ENCODE measurements at regions of chr3 and their contacts with region 1.

Region 1: GRCh38 chr3:98602078-98602678 is 8.8 kb upstream of the CPOX start:
- DNase-seq: peak; percentile 40
- H3K4me3 Mint-ChIP-seq: no peak overlapping the region
- H3K27ac Mint-ChIP-seq: no peak overlapping the region
- H3K4me1 Mint-ChIP-seq: peaks cover 4% of the 10 kb centered on the region
- H3K27me3 Mint-ChIP-seq: peaks cover 20% of the 10 kb centered on the region

Region 2: DNA sequence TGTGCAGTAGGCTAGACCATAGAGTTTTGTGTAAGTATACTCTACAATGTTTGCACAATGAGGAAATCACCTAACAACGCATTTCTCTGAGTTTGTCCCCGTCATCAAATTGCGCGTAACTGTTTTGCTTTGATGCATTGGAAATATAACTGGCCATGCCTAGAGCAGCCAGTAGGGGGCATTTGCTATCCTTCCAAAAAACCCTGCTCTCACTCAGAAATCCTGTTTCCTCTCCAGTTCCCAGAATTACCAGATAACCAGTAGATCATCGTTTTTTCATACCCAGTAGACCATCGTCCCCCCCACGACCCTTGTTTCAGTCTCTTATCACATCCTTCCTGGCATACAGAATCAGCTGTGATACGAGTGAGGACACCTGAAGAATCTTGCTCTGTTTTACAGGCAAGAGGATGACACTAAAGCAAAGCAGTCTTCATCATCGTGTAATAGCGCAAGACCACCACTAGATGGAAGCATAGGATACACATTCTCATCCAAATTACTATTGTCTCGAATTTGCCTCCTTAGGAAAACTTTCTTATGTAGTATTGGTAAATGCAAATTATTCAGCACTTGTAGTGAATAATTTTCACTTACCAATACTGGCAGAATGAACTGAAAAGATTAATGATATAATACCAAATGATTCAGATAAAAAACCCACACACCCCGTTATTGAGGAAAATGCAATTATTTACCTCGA is 562.7 kb before region 1 on chr3:
- CTCF ChIA-PET with region 1: interaction called, 10 read pairs
- DNase-seq: peak; percentile 84
- H3K4me3 Mint-ChIP-seq: peak overlapping the region; percentile 80
- H3K27ac Mint-ChIP-seq: peak overlapping the region; percentile 90
- H3K4me1 Mint-ChIP-seq: peaks cover 22% of the 10 kb centered on the region
- H3K27me3 Mint-ChIP-seq: peaks cover 31% of the 10 kb centered on the region

Region 3: DNA sequence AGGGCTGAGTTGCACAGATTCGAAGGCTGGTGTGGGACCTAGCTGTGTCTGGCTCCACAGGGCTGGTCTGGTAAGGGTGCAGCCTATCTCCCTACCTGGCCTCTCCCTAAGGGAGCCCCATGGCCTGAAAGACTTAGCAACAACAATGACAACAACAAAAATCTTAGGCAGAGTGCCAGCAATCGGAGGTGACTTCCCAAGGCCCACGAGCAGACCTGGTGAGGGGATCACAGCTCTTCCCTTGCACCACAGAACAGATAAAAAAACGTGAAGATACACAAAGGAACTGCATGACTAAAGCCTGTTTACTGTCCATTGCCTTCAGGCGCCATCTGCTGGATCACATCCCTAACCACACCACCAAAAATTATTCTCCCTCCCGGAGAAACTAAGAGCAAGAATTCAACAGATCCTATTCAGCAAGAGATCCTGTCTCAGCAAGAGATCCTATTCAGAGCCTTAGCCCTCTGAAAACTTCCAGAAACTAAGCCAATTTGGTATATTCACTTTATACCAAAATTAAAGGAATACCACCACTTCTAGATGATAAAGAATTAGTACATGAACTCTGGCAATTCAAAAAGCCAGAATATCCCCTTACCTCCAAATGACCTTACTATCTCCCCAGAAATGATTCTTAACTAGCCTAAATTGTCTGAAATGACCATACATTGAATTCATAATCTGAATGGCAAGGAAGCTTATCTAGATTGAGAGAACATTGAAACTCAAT is 272.6 kb before region 1 on chr3:
- CTCF ChIA-PET with region 1: interaction called, 12 read pairs
- DNase-seq: peak; percentile 61
- H3K4me3 Mint-ChIP-seq: no peak overlapping the region
- H3K27ac Mint-ChIP-seq: no peak overlapping the region
- H3K4me1 Mint-ChIP-seq: peaks cover 24% of the 10 kb centered on the region
- H3K27me3 Mint-ChIP-seq: peaks cover 26% of the 10 kb centered on the region

Region 4: GRCh38 chr3:98612587-98612986 is 10.4 kb after region 1 on chr3:
- CTCF ChIA-PET with region 1: interaction called, 17 read pairs
- DNase-seq: no peak
- H3K4me3 Mint-ChIP-seq: no peak overlapping the region
- H3K27ac Mint-ChIP-seq: no peak overlapping the region
- H3K4me1 Mint-ChIP-seq: no peaks in the 10 kb centered on the region
- H3K27me3 Mint-ChIP-seq: peaks cover 16% of the 10 kb centered on the region

Region 5: GRCh38 chr3:98657457-98657856 is 55.3 kb after region 1 on chr3:
- CTCF ChIA-PET with region 1: interaction called, 19 read pairs
- DNase-seq: peak; percentile 67
- H3K4me3 Mint-ChIP-seq: no peak overlapping the region
- H3K27ac Mint-ChIP-seq: no peak overlapping the region
- H3K4me1 Mint-ChIP-seq: peaks cover 2% of the 10 kb centered on the region
- H3K27me3 Mint-ChIP-seq: peaks cover 18% of the 10 kb centered on the region

Region 6: GRCh38 chr3:98811048-98811447 is 208.9 kb after region 1 on chr3:
- CTCF ChIA-PET with region 1: interaction called, 60 read pairs
- DNase-seq: no peak
- H3K4me3 Mint-ChIP-seq: no peak overlapping the region
- H3K27ac Mint-ChIP-seq: no peak overlapping the region
- H3K4me1 Mint-ChIP-seq: no peaks in the 10 kb centered on the region
- H3K27me3 Mint-ChIP-seq: no peaks in the 10 kb centered on the region

Region 7: GRCh38 chr3:98817547-98818041 is 215.4 kb after region 1 on chr3:
- CTCF ChIA-PET with region 1: interaction called, 60 read pairs
- DNase-seq: no peak
- H3K4me3 Mint-ChIP-seq: no peak overlapping the region
- H3K27ac Mint-ChIP-seq: no peak overlapping the region
- H3K4me1 Mint-ChIP-seq: no peaks in the 10 kb centered on the region
- H3K27me3 Mint-ChIP-seq: no peaks in the 10 kb centered on the region

Measured in activated naive CD4-positive, alpha-beta T cell treated with anti-CD3 and anti-CD28 coated beads, Interleukin-2, amount 10 ng/mL, durations not matched to agents 7 days and 5 days (primary cell).